Right ventricle myocardium inferior (tissue), 1 donor: ENCODE measurements at regions of chr6 and their contacts with region 1.

Region 1: DNA sequence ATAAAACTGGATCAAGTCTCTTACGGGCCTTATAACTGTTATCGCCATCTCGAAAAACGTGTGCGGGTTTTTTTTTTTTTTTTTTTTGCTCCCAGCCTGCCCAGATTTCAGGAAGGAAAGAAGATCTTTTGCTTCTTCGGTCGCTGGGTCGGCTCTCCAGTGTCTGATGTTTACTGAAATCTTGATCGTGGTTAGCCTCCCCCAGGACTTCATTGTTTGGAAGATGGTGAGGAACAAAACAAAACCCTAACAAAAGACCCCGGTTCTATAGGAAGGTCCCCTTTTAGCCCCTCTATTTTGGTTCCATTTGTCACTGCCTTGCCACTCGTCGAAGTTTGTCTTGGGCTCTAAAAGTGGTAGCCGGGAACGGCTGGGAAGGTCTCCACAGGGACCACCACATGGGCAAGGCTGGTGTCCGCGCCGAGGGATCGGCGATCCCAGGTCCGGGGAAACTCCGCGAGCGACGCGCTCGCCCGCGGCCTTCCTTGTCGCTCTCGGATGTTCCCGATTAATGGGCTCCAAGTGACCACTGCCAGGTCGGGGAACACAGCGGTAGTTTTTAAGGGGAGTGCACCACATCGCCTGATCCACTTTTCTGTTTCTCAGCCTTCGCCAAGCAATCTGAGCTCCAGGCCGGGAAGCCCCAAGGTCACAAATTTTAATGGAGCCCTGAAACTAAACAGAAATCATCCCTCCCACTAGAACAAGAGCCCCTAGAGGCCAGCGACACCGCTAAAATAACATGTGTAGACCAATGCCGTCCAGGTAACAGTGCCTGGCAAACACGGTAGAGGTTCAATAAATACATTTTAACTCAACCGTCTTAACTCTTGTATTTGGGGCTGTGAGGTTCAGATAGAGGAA is 27.0 kb downstream of the TRIM27 start:
- DNase-seq: no peak
- ATAC-seq: peak; percentile 43

Region 2: DNA sequence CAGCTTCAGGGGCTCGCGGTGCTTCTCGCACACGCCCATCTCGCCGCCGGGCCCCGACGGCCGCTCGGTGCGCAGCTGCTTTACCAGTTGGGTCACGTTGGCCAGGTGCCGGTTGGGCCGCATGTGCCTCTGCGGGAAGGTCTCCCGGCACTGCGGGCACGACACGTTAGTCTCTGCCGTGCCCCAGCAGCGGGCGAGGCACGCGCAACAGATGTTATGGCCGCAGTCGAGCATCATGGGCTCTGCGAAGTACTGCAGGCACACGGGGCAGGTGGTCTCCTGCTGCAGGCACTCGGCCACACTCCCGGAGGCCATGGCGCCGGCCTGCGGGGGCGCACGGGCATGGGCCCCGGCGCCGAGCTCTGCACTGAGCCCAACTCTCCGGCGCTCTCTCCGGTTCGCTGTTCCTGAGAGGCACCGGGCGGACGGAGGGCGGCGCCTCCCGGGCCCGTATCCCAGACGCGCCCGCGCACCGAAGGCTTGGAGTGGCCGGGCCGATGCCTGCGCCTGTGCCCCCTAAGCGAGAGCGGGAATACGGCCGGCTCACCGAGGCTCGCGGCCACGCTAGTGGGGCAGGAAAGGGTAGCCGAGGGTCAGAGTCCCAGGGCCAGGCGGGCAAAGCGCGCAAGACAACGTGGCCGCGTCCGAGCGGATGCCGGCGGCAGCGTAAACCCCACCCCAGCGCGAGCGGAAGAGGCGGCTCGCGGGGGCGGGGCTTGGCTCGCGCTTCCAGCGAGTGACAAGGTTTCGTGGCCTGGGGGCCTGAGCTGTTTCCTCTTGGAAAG is 26.8 kb after region 1 on chr6 and contains the start of gene TRIM27:
- intact Hi-C with region 1: loop called (anchors 1 kb)
- DNase-seq: peak; percentile 96
- ATAC-seq: peak; percentile 97
- total RNA-seq, gene TRIM27: 18.5 TPM

Region 3: GRCh38 chr6:28940858-28941680 is 44.3 kb after region 1 on chr6:
- intact Hi-C with region 1: loop called (anchors 1 kb)
- DNase-seq: no peak
- ATAC-seq: peak; percentile 86

Region 4: DNA sequence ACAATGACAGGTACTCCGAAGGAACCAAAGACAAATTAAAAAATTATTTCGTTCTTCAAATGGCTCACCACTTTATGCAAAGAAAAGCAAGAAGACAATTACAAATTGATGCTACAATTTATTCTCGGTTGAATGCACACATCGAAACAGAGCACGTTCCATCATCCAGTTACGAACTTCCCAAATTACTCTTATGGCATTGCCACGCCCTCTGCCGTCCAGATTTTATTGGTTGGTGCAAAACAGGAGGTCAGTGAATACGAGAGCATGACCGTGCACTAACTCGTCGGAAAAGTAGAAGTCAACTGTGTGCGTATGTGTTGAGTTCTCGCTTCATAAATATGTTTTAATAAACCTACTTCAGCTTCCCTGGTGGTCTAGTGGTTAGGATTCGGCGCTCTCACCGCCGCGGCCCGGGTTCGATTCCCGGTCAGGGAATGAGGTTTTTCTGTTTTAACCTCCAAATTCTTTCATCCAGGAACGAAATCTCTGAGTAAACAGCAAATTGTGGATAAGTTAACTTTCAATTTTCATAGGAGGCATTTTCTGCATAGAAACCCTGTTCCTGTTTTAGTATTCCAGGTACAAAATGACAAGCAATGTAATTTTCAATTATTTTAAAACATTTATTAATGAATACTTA is 85.2 kb after region 1 on chr6:
- intact Hi-C with region 1: loop called (anchors 1 kb)
- DNase-seq: peak; percentile 85
- ATAC-seq: peak; percentile 86